ENCODE measurements at regions of chr4 and their contacts with region 1.

Region 1: DNA sequence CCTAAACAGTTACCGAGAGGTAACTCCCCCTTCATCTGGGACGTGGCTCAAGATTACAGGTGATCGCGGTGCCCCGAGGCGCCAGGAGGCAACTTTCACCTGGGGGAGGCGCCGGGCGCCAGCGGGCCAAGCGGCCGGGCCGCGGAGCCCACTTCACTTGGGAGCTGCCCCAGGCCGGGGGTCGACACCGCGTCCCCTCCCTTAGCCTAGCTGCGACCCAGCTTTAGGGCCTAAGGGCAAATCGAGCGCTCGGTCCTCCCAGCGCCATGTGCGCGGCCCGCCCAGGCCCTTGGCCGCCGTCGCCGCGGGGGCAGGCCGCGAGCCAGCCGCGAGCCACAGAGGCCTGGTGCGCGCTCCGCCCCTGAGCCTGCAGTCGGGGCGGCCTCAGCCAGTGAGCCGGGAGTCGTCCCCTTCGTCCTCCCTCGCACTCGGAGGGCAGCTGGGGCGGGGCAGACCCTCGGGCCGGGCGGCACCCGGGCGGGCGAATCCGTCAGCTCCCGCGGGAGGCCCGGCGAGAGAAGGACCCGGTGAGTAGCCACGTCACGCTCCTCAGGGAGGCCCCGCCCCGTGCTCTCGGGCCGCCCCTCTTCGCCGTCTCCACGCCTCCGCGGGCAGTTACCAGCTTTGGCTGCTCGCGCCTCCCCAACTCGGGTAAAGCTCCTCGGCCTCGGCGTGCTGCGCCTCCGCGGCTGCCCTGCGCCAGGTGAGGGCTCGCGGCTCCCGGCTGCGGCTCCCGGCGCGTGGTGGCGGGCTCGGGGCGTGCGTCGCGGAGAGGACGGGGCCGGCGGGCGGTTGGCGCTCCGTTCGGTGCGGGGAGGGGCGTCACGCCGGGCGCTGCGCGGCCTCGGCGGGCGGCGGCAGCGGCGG is at the start of gene LARP1B:
- DNase-seq: peak; percentile 93
- H3K4me3 Mint-ChIP-seq: peak within 1 kb of the TSS; percentile 83
- H3K27ac Mint-ChIP-seq: peak within 1 kb of the TSS; percentile 83
- H3K4me1 Mint-ChIP-seq: peaks cover 17% of the 10 kb centered on the region
- H3K27me3 Mint-ChIP-seq: peaks cover 5% of the 10 kb centered on the region
- total RNA-seq, gene LARP1B: 13.8 to 14.0 TPM

Region 2: GRCh38 chr4:127880764-127881562 is 180.0 kb before region 1 on chr4 and contains the start of gene PLK4:
- CTCF ChIA-PET with region 1: no interaction called
- POLR2A ChIA-PET with region 1: interaction called, 28 read pairs
- DNase-seq: peak; percentile 97
- H3K4me3 Mint-ChIP-seq: peak within 1 kb of the TSS; percentile 95
- H3K27ac Mint-ChIP-seq: peak within 1 kb of the TSS; percentile 93
- H3K4me1 Mint-ChIP-seq: peaks cover 58% of the 10 kb centered on the region
- H3K27me3 Mint-ChIP-seq: no peaks in the 10 kb centered on the region
- total RNA-seq, gene PLK4: 43.8 to 45.7 TPM

Region 3: GRCh38 chr4:128287871-128288688 is 227.1 kb after region 1 on chr4:
- CTCF ChIA-PET with region 1: interaction called, 3 read pairs
- POLR2A ChIA-PET with region 1: interaction called, 37 read pairs
- DNase-seq: peak; percentile 99
- H3K4me3 Mint-ChIP-seq: peak overlapping the region; percentile 96
- H3K27ac Mint-ChIP-seq: peak overlapping the region; percentile 74
- H3K4me1 Mint-ChIP-seq: peaks cover 31% of the 10 kb centered on the region
- H3K27me3 Mint-ChIP-seq: peaks cover 2% of the 10 kb centered on the region

Measured in activated CD4-positive, alpha-beta memory T cell treated with anti-CD3 and anti-CD28 coated beads, Interleukin-2, amount 10 ng/mL, durations not matched to agents 7 days and 5 days (primary cell).